K562 (cell line): ENCODE measurements at regions of chr15 and their contacts with region 1.

Region 1: DNA sequence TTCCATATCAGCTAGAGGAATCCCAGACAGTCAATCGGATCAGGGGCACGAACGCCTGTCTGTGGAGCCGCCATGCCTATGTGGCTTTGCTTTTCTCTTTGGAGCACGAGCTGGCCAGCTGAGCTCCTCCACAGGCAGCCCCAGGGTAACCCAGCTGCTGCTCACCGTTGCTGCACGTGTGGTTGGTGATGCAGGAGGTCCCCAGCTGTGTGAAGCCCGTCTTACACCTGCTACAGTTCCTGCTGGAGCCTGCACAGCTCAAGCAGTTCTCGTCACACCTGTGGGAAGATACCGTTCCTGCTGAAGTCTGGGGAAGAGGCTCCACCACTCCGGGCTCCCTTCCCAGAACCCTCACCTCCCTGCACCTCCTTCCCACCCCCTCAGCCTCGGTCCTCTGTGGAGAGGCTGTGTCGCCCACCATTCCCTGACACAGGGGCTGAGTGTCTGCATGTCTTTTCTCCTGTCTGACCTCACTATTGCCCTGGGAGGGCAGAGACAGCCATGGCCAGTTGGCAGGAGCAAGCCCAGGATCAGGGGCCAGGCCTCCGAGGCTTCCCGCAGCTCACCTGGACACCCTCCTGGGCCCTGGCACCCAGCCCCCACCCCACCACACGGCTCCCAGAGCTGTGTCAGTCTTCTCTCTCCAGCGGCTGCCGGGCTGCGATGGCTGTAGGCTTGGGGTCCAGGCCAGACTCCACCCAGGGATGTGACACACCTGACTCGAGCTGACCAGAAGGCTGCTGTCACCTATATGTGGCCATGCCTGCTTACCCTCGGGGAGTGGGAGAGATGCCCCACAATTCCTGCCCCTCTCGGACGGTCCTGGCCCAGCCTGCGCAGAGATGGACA is 12.2 kb upstream of the SNRPA1 start:
- DNase-seq: no peak
- ATAC-seq: peak; percentile 12; the same call in 2 of the 3 replicates
- H3K4me3 ChIP-seq: no peak overlapping the region
- H3K27ac ChIP-seq: no peak overlapping the region
- H3K4me1 ChIP-seq: no peaks in the 10 kb centered on the region; a peak in 1 of 5 replicates
- H3K27me3 ChIP-seq: peaks cover 0 to 48% of the 10 kb centered on the region in 2 experiments; a peak in 4 of 5 replicates
- CTCF ChIP-seq: no peak
- EP300 ChIP-seq: no peak
- POLR2A ChIP-seq: no peak
- RAD21 ChIP-seq: no peak

Region 2: GRCh38 chr15:100849252-100850171 is 457.8 kb before region 1 on chr15:
- CTCF ChIA-PET with region 1: no interaction called
- POLR2A ChIA-PET with region 1: no interaction called
- in situ Hi-C with region 1: no loop called
- intact Hi-C with region 1: no loop called
- DNase-seq: peak; percentile 11 to 45 (median 39)
- ATAC-seq: peak; percentile 89
- H3K4me3 ChIP-seq: peak overlapping the region; percentile 15; the same call in 1 of the 2 replicates
- H3K27ac ChIP-seq: no peak overlapping the region; the same call in 2 of the 3 replicates
- H3K4me1 ChIP-seq: peaks cover 0 to 8% of the 10 kb centered on the region in 2 experiments; a peak in 2 of 5 replicates
- H3K27me3 ChIP-seq: peaks cover 25 to 41% of the 10 kb centered on the region in 2 experiments; a peak in 4 of 5 replicates
- CTCF ChIP-seq: 0 out of 6 replicates have a peak, but pooled peaks of 2 of the 3 experiments have one; percentile 5 to 26
- EP300 ChIP-seq: no peak
- POLR2A ChIP-seq: no peak
- RAD21 ChIP-seq: no peak

Region 3: DNA sequence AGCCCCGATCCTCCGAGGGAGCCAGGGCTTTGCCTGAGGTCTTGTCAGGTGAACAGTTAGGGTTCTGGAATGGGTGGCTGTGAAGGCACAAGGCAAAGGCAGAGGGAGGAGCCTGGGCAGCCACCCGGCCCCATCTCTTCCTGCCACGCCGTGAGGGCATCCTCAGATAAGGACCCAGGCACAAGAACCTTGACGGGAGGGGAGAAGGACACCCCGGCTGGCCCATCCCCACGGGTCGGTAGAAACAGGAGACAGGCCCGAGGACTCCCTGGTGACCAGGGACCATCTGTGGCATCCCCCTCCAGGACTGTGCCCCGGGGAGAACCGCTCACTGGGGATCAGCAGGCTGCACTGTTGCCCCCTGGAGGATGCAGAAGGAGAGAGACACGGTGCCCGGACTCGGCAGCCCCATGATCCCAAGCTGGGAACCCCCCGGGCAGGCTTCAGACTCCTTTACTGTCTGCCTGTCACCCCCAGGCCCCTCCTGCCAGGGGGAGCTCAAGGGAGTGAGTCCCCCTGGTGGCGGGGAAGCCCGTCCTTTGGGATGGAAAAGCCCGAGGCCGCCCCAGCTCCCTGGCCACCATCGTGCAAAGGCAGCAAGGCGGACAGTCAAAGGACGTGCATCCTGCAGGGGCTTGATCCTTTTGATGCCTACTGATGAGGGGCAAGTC is 194.6 kb after region 1 on chr15:
- CTCF ChIA-PET with region 1: no interaction called
- POLR2A ChIA-PET with region 1: no interaction called
- in situ Hi-C with region 1: loop called (anchors 10 kb)
- intact Hi-C with region 1: no loop called
- DNase-seq: peak; percentile 51 to 67 (median 54)
- ATAC-seq: peak; percentile 87
- H3K4me3 ChIP-seq: no peak overlapping the region
- H3K27ac ChIP-seq: no peak overlapping the region; the same call in 2 of the 3 replicates
- H3K4me1 ChIP-seq: peaks cover 18 to 26% of the 10 kb centered on the region in 2 experiments; a peak in 4 of 5 replicates
- H3K27me3 ChIP-seq: peaks cover 4 to 47% of the 10 kb centered on the region in 2 experiments; a peak in 4 of 5 replicates
- CTCF ChIP-seq: peak; percentile 52 to 69 (median 62)
- EP300 ChIP-seq: no peak
- POLR2A ChIP-seq: no peak
- RAD21 ChIP-seq: peak; percentile 22 to 61; a peak in 3 of 4 replicates